ENCODE measurements at regions of chr14 and their contacts with region 1.

Region 1: DNA sequence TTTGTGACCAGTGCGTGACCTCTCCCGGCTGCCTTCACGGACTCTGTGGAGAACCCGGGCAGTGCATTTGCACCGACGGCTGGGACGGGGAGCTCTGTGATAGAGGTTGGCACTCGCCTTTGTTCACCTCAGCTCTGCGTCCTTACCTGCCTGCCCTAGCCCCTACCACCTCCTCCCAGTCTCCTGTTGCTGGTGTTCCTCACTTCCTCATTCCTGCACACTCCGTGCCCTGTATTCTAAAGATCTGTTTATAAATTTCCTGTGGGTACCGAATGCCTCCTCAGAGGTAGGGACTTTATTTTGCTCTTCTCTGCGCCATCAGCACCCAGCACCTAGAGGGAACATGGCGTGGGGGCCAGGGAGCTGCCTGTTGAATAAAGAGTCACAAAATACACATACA is 2.3 kb downstream of the DLK1 start:
- DNase-seq: no peak
- H3K4me3 ChIP-seq: no peak overlapping the region
- H3K27ac ChIP-seq: no peak overlapping the region
- H3K4me1 ChIP-seq: no peaks in the 10 kb centered on the region
- H3K27me3 ChIP-seq: no peaks in the 10 kb centered on the region
- CTCF ChIP-seq: no peak
- POLR2A ChIP-seq: no peak

Region 2: GRCh38 chr14:100684961-100685360 is 44.0 kb before region 1 on chr14:
- intact Hi-C with region 1: loop called (anchors 1 kb)
- DNase-seq: no peak
- H3K4me3 ChIP-seq: no peak overlapping the region
- H3K27ac ChIP-seq: no peak overlapping the region
- H3K4me1 ChIP-seq: peaks cover 15% of the 10 kb centered on the region
- H3K27me3 ChIP-seq: no peaks in the 10 kb centered on the region
- CTCF ChIP-seq: no peak
- POLR2A ChIP-seq: no peak

Region 3: DNA sequence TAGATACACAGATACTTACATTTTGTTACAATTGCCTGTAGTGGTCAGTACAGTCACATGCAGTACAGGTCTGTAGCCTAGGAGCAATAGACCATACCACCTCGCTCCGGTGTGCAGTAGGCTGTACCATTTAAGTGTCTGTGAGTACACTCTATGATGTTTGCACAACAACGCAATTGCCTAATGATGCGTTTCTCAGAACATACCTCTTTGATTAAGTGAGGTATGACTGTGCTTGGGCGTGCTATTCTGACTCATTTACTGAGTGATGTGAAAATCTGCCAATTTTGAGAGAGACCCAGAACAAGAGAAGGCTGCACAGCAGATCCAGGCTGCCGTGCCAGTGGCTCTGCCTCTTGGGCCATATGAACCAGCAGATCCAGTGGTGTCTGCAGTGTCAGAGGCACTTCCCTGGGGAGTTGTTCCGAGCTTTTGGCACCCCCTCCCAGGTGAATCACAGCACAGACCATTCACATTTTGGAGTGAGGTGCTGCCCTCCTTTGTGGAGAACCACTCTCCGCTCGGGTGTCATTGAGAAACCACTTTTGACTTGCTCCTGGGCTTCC is 18.1 kb after region 1 on chr14:
- intact Hi-C with region 1: no loop called
- DNase-seq: no peak
- H3K4me3 ChIP-seq: no peak overlapping the region
- H3K27ac ChIP-seq: no peak overlapping the region
- H3K4me1 ChIP-seq: no peaks in the 10 kb centered on the region
- H3K27me3 ChIP-seq: no peaks in the 10 kb centered on the region
- CTCF ChIP-seq: no peak
- POLR2A ChIP-seq: no peak